Colonic mucosa (tissue), 4 donors: ENCODE measurements at regions of chr21 and their contacts with region 1.

Region 1: DNA sequence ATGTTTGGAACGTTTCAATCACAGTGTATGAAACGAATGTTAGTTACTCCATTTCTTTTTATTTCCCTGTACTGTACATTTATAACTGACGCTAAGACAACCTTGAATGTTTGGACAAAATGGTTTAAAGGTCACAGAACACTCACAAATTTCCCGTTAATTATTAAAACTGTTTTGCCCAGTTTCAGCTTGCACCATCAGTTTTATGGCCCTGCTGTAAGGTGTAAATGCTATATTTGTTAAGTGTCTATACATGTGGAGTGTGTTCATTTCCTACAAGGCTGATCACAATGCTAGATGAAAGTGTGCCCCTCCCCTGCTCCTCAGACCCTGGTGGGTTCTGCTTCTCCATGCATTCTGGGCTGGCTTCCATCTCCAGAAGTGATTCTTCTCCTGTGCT is 57.9 kb upstream of the ETS2 start:
- DNase-seq: no peak
- H3K4me3 ChIP-seq: no peak overlapping the region
- H3K27ac ChIP-seq: no peak overlapping the region
- H3K4me1 ChIP-seq: no peaks in the 10 kb centered on the region
- H3K27me3 ChIP-seq: no peaks in the 10 kb centered on the region
- CTCF ChIP-seq: no peak

Region 2: GRCh38 chr21:38787461-38788274 is 39.9 kb after region 1 on chr21:
- intact Hi-C with region 1: loop called (anchors 5 kb)
- DNase-seq: peak; percentile 86
- H3K4me3 ChIP-seq: no peak overlapping the region
- H3K27ac ChIP-seq: peak overlapping the region; percentile 76
- H3K4me1 ChIP-seq: peaks cover 2% of the 10 kb centered on the region
- H3K27me3 ChIP-seq: no peaks in the 10 kb centered on the region
- CTCF ChIP-seq: no peak